OCI-LY7 (cell line): ENCODE measurements at regions of chr1 and their contacts with region 1.

Region 1: GRCh38 chr1:153670859-153671627 is at the start of gene ILF2:
- DNase-seq: peak; percentile 100
- H3K4me3 ChIP-seq: peak within 1 kb of the TSS; percentile 97
- H3K27ac ChIP-seq: peak within 1 kb of the TSS; percentile 78
- H3K4me1 ChIP-seq: peaks cover 28% of the 10 kb centered on the region
- CTCF ChIP-seq: peak; percentile 69
- total RNA-seq, gene ILF2: 287 and 300 TPM in 2 replicates

Region 2: DNA sequence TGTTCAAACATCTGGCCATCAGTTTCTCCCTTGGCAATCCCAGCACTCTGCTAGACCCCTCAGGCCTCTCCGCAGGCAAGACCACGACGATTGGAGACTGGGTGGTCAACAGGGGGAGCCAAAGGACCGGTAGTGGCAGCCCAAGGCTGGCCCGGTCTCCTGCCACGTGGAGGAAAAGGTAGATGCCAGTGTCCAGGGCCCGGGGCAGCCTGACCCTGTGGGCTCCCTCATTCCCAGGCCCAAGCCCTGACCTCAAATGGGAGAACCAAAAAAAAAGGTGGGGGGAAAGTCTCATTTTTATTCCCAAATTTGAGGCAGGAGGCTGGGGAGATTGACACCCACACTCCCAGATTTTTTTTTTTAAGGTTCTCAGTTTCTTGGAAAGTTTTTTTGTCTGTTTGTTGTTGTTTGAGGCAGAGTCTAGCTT is 160.0 kb before region 1 on chr1:
- CTCF ChIA-PET with region 1: no interaction called
- POLR2A ChIA-PET with region 1: no interaction called
- intact Hi-C with region 1: loop called (anchors 10 kb)
- DNase-seq: peak; percentile 77
- H3K4me3 ChIP-seq: no peak overlapping the region
- H3K27ac ChIP-seq: no peak overlapping the region
- H3K4me1 ChIP-seq: no peaks in the 10 kb centered on the region
- CTCF ChIP-seq: peak; percentile 96

Region 3: GRCh38 chr1:153633716-153634665 is 37.1 kb before region 1 on chr1 and contains the start of gene CHTOP:
- CTCF ChIA-PET with region 1: interaction called, 3 read pairs
- POLR2A ChIA-PET with region 1: interaction called, 8 read pairs
- intact Hi-C with region 1: loop called (anchors 2 kb)
- DNase-seq: peak; percentile 99
- H3K4me3 ChIP-seq: peak within 1 kb of the TSS; percentile 83
- H3K27ac ChIP-seq: peak within 1 kb of the TSS; percentile 97
- H3K4me1 ChIP-seq: peaks cover 16% of the 10 kb centered on the region
- CTCF ChIP-seq: no peak
- total RNA-seq, gene CHTOP: 70.9 and 85.3 TPM in 2 replicates

Region 4: GRCh38 chr1:153727463-153728304 is 56.6 kb after region 1 on chr1 and contains the start of gene INTS3:
- CTCF ChIA-PET with region 1: no interaction called
- POLR2A ChIA-PET with region 1: interaction called, 3 read pairs
- intact Hi-C with region 1: loop called (anchors 1 kb)
- DNase-seq: peak; percentile 100
- H3K4me3 ChIP-seq: peak within 1 kb of the TSS; percentile 93
- H3K27ac ChIP-seq: peak within 1 kb of the TSS; percentile 64
- H3K4me1 ChIP-seq: peaks cover 24% of the 10 kb centered on the region
- CTCF ChIP-seq: peak; percentile 27; the same call in 1 of the 2 replicates
- total RNA-seq, gene INTS3: 31.6 and 33.5 TPM in 2 replicates